CD8-positive, alpha-beta memory T cell (primary cell): ENCODE measurements at regions of chr14 and their contacts with region 1.

Region 1: DNA sequence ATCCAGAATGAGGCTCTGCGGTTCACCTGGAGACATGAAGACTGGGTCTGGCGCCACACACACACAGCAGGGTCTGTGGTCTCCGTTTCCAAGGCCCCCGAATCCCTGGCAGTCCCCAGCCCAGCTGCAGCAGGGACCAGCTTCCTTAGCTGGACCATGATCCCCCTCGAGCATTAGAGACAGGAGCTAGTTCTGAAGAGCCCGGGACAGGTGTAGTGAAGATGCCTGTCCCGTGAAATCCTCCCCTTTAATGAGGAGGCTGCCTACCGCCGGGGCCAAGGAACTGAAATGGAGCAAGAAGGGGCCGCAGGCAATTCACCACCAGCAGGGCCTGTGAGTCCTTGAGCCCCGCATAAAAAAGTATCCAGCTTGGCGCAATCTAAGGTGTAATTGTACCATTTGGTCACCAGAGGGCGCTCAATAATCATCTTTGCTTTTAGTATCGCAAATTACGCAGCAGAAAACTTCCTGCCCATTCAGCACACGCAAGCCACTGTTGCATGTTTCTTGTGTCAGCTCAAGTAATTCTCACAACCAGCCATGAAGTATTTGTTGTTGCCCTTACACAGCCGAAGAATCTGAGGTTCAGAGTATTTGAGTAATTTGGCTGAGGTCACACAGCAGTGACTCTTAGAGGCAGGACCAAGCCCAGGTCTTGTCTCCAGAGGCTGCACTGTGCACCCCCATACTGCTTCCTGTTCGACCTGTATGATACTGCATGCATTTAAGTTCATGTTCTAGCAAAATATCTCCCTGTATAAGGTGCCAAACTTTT is 54.3 kb upstream of the PPP2R5C start:
- DNase-seq: peak in 4 of 5 donors; percentile 49 to 79 (median 76)
- H3K4me3 ChIP-seq: peak overlapping the region; percentile 24
- H3K4me3 Mint-ChIP-seq: peak overlapping the region; percentile 28 to 85 (median 68)
- H3K27ac ChIP-seq: peak overlapping the region; percentile 29
- H3K27ac Mint-ChIP-seq: peak overlapping the region; percentile 65 to 97 (median 92)
- H3K4me1 ChIP-seq: peaks cover 39% of the 10 kb centered on the region
- H3K4me1 Mint-ChIP-seq: peaks cover 40 to 63% (median 52%) of the 10 kb centered on the region in 3 donors
- H3K27me3 ChIP-seq: no peaks in the 10 kb centered on the region
- H3K27me3 Mint-ChIP-seq: no peaks in the 10 kb centered on the region

Region 2: DNA sequence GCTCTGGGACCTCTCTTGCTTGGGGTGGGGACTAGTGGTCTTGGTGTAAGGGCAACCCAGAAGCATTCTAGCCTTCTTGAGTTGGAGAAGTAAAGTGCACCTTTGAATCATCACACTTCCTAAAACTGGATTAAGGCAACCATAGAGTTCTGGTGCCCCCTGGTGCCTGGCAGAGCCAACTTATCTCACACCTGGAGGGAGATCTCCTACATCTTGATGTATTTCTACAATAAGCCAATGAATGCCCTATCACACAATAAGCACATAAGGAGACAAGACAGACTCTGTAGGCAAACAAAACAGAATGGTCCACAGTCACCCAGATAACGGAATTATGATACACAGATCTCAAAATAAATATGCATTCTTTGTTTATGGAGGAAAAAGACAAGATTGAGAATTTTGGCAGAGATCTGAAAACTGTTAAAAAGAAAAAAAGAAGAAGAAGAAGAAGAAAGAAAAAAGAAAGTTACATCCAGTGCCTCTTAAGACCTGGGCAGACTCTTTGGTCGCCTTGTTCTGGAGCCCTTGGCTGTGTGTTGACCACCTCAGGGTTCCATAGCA is 41.7 kb before region 1 on chr14:
- CTCF ChIA-PET with region 1: no interaction called
- POLR2A ChIA-PET with region 1: no interaction called
- DNase-seq: peak in 1 of 5 donors; percentile 3
- H3K4me3 ChIP-seq: no peak overlapping the region
- H3K4me3 Mint-ChIP-seq: no peak overlapping the region
- H3K27ac ChIP-seq: no peak overlapping the region
- H3K27ac Mint-ChIP-seq: no peak overlapping the region
- H3K4me1 ChIP-seq: no peaks in the 10 kb centered on the region
- H3K4me1 Mint-ChIP-seq: no peaks in the 10 kb centered on the region
- H3K27me3 ChIP-seq: peaks cover 8% of the 10 kb centered on the region
- H3K27me3 Mint-ChIP-seq: peaks cover 31 to 60% of the 10 kb centered on the region in 2 donors

Region 3: GRCh38 chr14:101731187-101732080 is 24.2 kb after region 1 on chr14:
- CTCF ChIA-PET with region 1: interaction called, 14 read pairs
- POLR2A ChIA-PET with region 1: interaction called, 6 read pairs
- DNase-seq: peak; percentile 67 to 85 (median 75)
- H3K4me3 ChIP-seq: peak overlapping the region; percentile 53
- H3K4me3 Mint-ChIP-seq: peak overlapping the region; percentile 58 to 83 (median 81)
- H3K27ac ChIP-seq: peak overlapping the region; percentile 86
- H3K27ac Mint-ChIP-seq: peak overlapping the region; percentile 89 to 99 (median 98)
- H3K4me1 ChIP-seq: peaks cover 29% of the 10 kb centered on the region
- H3K4me1 Mint-ChIP-seq: peaks cover 52 to 65% (median 58%) of the 10 kb centered on the region in 3 donors
- H3K27me3 ChIP-seq: no peaks in the 10 kb centered on the region
- H3K27me3 Mint-ChIP-seq: no peaks in the 10 kb centered on the region

Region 4: DNA sequence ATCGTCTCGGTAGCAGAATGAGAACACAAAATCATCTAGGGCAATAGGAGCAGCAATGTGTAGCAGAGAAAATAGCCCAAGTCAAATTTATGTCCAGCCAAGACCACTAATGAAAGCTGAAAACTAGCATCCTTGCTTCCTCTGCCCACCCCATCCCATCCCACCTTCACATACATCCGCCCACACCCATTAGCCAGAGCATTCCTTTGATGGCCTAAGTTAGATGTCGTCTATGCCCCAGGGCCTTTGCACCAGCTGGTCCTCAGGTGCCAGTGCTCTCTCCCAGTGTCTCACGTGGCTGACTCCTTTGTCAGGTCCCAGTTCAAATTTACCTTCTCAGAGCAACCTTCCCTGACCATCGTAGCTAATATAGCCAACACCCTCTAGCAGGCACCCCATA is 36.4 kb after region 1 on chr14:
- CTCF ChIA-PET with region 1: no interaction called
- POLR2A ChIA-PET with region 1: no interaction called
- DNase-seq: no peak
- H3K4me3 ChIP-seq: no peak overlapping the region
- H3K4me3 Mint-ChIP-seq: no peak overlapping the region
- H3K27ac ChIP-seq: no peak overlapping the region
- H3K27ac Mint-ChIP-seq: peak overlapping the region in 1 of 8 donors; percentile 38
- H3K4me1 ChIP-seq: no peaks in the 10 kb centered on the region
- H3K4me1 Mint-ChIP-seq: peaks cover 6 to 14% (median 6%) of the 10 kb centered on the region in 3 donors
- H3K27me3 ChIP-seq: no peaks in the 10 kb centered on the region
- H3K27me3 Mint-ChIP-seq: peaks cover 0 to 3% of the 10 kb centered on the region in 2 donors

Region 5: DNA sequence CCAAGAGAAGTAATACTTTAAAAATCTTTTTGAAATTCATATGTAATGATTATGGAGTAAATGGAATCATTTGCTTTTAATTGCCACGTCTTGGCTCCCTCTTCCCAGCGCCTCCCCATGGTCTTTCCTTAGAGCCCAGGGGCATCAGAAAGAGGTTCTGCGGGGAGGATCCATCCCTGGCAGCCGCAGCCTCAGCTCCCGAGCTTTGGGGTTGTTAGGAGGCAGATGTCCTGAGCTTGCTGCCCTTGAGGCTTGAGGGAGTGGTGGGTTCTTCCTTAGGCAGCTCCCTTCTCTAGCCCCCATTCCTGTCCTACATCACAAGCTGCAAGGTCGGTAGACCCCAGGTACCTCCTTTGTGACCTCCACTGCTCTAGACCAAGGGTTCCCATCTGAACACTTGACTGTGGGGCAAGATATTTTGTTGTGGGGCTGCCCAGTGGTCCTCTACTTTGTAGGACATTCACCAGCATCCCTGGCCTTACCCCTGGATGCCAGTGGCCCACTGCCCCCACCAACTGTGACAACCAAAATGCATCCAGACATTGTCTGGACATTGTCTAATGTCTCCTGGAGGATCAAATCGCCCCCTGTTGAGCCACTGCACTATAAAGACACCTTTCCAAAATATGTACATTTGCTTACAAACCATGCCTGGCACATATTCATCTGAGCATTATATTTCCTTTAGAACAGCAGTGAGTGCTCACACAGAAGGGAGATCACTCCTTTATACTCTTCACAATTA is 60.5 kb after region 1 on chr14:
- CTCF ChIA-PET with region 1: interaction called, 44 read pairs
- POLR2A ChIA-PET with region 1: interaction called, 6 read pairs
- DNase-seq: no peak
- H3K4me3 ChIP-seq: no peak overlapping the region
- H3K4me3 Mint-ChIP-seq: no peak overlapping the region
- H3K27ac ChIP-seq: no peak overlapping the region
- H3K27ac Mint-ChIP-seq: peak overlapping the region in 4 of 8 donors; percentile 36 to 85 (median 44)
- H3K4me1 ChIP-seq: peaks cover 30% of the 10 kb centered on the region
- H3K4me1 Mint-ChIP-seq: peaks cover 34 to 75% (median 46%) of the 10 kb centered on the region in 3 donors
- H3K27me3 ChIP-seq: no peaks in the 10 kb centered on the region
- H3K27me3 Mint-ChIP-seq: peaks cover 0 to 3% of the 10 kb centered on the region in 2 donors

Region 6: GRCh38 chr14:101823511-101824120 is 116.4 kb after region 1 on chr14:
- CTCF ChIA-PET with region 1: interaction called, 3 read pairs
- POLR2A ChIA-PET with region 1: interaction called, 21 read pairs
- DNase-seq: peak; percentile 51 to 86 (median 77)
- H3K4me3 ChIP-seq: peak overlapping the region; percentile 87
- H3K4me3 Mint-ChIP-seq: peak overlapping the region; percentile 90 to 94 (median 93)
- H3K27ac ChIP-seq: peak overlapping the region; percentile 96
- H3K27ac Mint-ChIP-seq: peak overlapping the region; percentile 95 to 99 (median 98)
- H3K4me1 ChIP-seq: peaks cover 80% of the 10 kb centered on the region
- H3K4me1 Mint-ChIP-seq: peaks cover 79 to 89% (median 80%) of the 10 kb centered on the region in 3 donors
- H3K27me3 ChIP-seq: no peaks in the 10 kb centered on the region
- H3K27me3 Mint-ChIP-seq: peaks cover 0 to 16% of the 10 kb centered on the region in 2 donors